ENCODE measurements at regions of chr4 and their contacts with region 1.

Region 1: DNA sequence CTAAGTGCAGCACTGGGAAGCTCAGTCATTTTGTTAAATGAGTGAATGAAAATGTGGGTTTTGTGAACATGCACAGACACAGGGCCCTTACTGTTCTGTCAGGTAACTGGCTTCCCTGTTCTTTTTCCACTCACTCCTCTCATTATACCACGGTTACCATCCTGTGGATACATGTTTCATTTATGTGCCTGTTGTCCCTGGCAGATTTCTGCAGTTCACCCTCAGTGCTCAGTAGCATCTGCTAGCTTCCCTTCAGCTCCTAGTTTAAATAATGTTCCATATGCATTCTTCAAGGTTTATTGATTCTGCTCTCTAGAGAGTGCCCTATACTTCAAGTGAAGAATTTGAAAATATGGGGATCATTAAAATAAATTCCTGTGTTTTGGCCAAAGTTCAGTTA is 1634.3 kb upstream of the ADGRL3 start:
- DNase-seq: no peak
- H3K4me3 ChIP-seq: no peak overlapping the region
- H3K27ac ChIP-seq: no peak overlapping the region
- H3K4me1 ChIP-seq: no peaks in the 10 kb centered on the region
- H3K27me3 ChIP-seq: no peaks in the 10 kb centered on the region
- CTCF ChIP-seq: no peak
- POLR2A ChIP-seq: no peak

Region 2: GRCh38 chr4:59314637-59315036 is 251.2 kb before region 1 on chr4:
- intact Hi-C with region 1: loop called (anchors 5 kb)
- DNase-seq: no peak
- H3K4me3 ChIP-seq: no peak overlapping the region
- H3K27ac ChIP-seq: no peak overlapping the region
- H3K4me1 ChIP-seq: no peaks in the 10 kb centered on the region
- H3K27me3 ChIP-seq: no peaks in the 10 kb centered on the region
- CTCF ChIP-seq: no peak
- POLR2A ChIP-seq: no peak